Dorsolateral prefrontal cortex (tissue), 120 donors: ENCODE measurements at regions of chr2 and their contacts with region 1.

Region 1: DNA sequence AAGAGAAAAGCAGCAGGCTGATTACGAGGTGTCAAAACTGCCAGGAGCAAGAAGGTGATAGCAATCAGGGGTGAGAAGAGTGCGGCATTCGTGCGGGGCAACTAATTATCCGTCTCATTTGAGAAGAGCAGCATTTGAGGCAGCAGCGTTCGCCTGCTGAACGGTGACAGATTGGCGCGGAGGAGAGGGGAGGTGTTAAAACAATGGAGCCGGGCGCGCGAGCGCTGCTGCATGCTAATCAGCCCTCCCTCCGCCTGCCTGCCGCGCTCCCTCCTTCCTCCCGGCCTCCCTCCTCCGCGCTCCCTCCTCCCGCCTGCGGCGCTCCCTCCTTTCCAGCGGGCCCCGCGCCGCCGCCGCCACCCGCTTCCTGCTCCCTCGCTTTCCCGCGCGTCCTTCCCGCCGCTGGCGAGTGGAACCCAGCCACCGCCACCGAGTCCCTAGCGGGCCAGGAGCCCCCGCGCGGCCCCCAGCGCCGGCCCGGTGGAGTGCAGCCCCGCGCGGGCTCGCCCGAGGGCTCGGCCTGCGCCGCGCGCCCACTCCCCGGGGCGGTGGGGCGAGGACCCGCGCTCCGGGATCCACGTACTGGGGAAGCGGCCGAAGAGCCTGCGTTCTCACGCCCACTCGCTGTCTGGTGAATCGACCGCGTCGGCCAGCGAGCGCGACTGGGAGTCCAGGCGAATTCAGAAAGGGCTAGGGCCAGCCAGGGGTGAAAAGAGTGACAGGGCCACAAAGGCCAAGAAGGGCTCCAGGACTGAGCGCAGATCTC is 69.5 kb upstream of the PSMD14 start:
- DNase-seq: peak; percentile 84 to 93 (median 90)
- H3K4me3 ChIP-seq: peak overlapping the region; percentile 48 to 89 (median 70)
- H3K27ac ChIP-seq: peak overlapping the region; percentile 82 to 97 (median 93)
- H3K27me3 ChIP-seq: no peaks in the 10 kb centered on the region
- CTCF ChIP-seq: peak in 11 of 56 donors; percentile 0 to 27 (median 10)

Region 2: DNA sequence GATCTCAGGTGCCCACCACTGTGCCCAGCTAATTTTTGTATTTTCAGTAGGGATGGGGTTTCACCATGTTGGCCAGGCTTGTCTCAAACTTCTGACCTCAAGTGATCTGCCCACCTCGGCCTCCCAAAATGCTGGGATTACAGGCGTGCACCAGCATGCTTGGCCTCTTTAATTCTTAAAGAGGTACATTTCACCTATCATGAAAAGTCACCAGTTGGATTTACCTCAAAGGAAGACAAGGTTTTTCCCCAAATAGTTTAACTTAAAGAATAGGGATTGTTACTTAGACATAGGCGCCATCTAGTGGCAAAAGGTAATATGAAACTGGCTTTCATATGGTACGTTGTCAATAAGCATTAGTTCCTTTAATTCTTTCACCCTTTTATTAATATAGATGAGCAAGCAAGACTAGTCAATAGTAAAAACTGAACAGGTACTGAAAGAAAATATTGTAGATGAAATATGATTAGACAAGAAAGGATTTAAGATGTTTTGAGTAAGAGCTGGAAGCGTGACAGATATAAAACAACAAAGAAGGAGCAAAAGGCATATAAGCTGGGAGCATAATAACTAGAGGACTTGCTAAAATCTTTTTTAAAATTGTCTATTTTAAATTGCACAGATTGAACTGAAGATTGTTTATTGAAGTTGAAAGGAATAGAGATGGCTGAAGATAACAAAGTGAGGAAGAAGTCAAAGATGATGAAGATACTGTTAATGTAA is 34.5 kb after region 1 on chr2:
- intact Hi-C with region 1: loop called (anchors 5 kb)
- DNase-seq: no peak
- H3K4me3 ChIP-seq: peak overlapping the region in 1 of 59 donors; percentile 8
- H3K27ac ChIP-seq: no peak overlapping the region
- H3K27me3 ChIP-seq: no peaks in the 10 kb centered on the region
- CTCF ChIP-seq: peak; percentile 63 to 94 (median 84)

Region 3: GRCh38 chr2:161423421-161424393 is 185.0 kb after region 1 on chr2:
- intact Hi-C with region 1: loop called (anchors 5 to 10 kb)
- DNase-seq: no peak
- H3K4me3 ChIP-seq: peak overlapping the region; percentile 7 to 77 (median 50)
- H3K27ac ChIP-seq: peak overlapping the region in 51 of 59 donors; percentile 10 to 90 (median 74)
- H3K27me3 ChIP-seq: peaks cover 0 to 98% (median 75%) of the 10 kb centered on the region in 45 donors
- CTCF ChIP-seq: no peak